ENCODE measurements at regions of chr11 and their contacts with region 1.

Region 1: DNA sequence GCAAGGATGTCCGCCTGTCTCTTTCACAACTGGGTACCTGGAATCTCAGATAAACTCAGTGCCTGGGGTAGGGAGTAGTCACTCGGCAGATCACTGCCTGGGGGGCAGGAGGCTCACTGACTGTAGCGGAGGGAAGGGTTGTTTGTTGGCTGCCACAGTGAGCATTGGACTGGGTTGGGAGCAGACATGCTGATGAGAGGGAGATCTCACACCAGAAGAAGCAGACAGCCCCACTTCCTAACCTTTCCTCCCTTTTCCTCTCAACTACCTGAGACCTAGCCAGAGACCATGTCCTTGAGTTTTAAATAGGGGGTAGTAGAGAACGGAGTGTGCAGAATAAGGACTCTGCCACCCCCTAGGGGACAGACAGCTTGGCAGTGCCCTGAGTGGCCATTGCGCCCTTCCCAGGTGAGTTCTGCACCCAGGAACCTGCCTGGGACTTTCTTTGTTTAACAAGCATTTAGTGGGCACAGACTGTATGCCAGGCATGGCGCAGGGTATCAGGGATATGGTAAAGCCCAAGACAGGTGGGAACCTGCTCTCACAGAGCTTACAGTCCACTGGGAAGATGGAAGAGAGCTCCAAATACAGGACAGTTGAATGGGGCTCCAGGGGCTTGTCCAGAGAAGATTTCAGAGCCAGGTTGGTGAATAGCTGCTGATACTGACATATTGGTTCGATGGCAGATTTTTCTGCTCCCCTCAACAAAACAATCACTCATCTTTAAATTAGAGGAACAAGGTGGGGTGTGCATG is 115.7 kb upstream of the NNMT start:
- DNase-seq: peak in 1 of 9 donors; percentile 28
- ATAC-seq: peak; percentile 47
- H3K4me3 ChIP-seq: peak overlapping the region; percentile 12
- H3K4me3 Mint-ChIP-seq: peak overlapping the region in 7 of 10 donors; percentile 26 to 75 (median 63)
- H3K27ac ChIP-seq: no peak overlapping the region
- H3K27ac Mint-ChIP-seq: peak overlapping the region in 7 of 9 donors; percentile 46 to 96 (median 85)
- H3K4me1 ChIP-seq: peaks cover 48 to 74% of the 10 kb centered on the region in 2 donors
- H3K4me1 Mint-ChIP-seq: peaks cover 54 to 98% (median 83%) of the 10 kb centered on the region in 7 donors
- H3K27me3 ChIP-seq: no peaks in the 10 kb centered on the region
- H3K27me3 Mint-ChIP-seq: peaks cover 0 to under 1% (median 0%) of the 10 kb centered on the region in 5 donors

Region 2: DNA sequence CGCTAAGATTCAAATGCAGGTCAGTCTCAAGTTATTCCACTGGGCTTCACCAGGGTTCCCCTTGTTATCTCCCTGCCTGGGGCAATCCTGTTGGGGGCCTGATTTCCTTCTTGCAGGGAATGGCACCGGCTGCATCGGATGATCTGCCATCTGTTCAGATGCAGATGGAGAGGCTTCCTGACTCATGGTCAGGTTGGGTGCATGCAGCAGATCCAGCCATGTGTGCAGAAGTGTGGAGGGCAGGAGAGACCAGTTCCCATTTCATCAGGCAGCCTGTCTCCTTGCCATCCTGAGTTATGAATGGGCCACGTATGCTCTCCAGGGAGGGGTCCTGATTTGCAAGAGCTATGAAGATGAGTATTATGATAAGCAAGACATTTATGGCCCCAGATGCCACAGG is 1758.6 kb before region 1 on chr11:
- CTCF ChIA-PET with region 1: no interaction called
- POLR2A ChIA-PET with region 1: no interaction called
- intact Hi-C with region 1: no loop called
- DNase-seq: no peak
- ATAC-seq: no peak
- H3K4me3 ChIP-seq: no peak overlapping the region
- H3K4me3 Mint-ChIP-seq: no peak overlapping the region
- H3K27ac ChIP-seq: no peak overlapping the region
- H3K27ac Mint-ChIP-seq: no peak overlapping the region
- H3K4me1 ChIP-seq: no peaks in the 10 kb centered on the region
- H3K4me1 Mint-ChIP-seq: peaks cover 3 to 13% (median 9%) of the 10 kb centered on the region in 7 donors
- H3K27me3 ChIP-seq: no peaks in the 10 kb centered on the region
- H3K27me3 Mint-ChIP-seq: peaks cover 0 to 9% (median 5%) of the 10 kb centered on the region in 5 donors

Region 3: DNA sequence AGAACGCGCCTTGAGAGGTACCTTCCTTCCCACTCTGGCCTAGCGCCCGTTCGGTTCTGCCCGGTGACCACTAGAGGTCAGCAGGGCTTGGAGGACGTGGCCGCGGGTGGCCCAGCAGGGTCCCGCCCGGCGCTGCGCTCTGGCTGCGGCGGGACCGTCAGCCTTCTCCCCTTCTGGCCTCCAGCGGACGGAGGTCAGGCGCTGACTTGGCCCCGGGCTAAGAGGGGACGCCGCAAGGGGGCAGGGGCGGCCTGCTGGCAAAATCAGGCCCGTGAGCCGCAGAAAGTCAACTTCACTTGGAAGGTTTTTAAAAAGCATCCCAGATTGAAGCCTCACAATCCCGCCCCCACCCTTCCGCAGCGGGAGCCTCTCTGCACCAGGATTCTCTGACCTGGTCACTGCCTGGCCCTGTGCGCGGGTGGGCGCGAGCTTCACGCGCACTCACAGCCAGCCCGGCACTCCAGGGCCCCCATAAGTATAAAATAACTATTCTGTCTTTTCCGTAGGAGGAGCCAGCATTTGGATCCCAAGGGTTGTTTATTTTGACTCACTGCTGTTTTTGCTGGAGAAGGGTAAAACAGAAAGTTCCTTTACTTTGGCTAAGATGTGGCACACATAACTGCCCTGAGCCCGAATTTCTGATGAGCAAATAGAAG is 144.2 kb before region 1 on chr11:
- CTCF ChIA-PET with region 1: interaction called, 15 read pairs
- POLR2A ChIA-PET with region 1: no interaction called
- intact Hi-C with region 1: loop called in 1 of 2 experiments (anchors 1 kb)
- DNase-seq: peak; percentile 16 to 57 (median 42)
- ATAC-seq: peak; percentile 89
- H3K4me3 ChIP-seq: no peak overlapping the region
- H3K4me3 Mint-ChIP-seq: peak overlapping the region in 5 of 10 donors; percentile 11 to 57 (median 44)
- H3K27ac ChIP-seq: no peak overlapping the region
- H3K27ac Mint-ChIP-seq: peak overlapping the region in 1 of 9 donors; percentile 28
- H3K4me1 ChIP-seq: peaks cover 0 to 3% of the 10 kb centered on the region in 2 donors
- H3K4me1 Mint-ChIP-seq: peaks cover 0 to 5% (median 0%) of the 10 kb centered on the region in 7 donors
- H3K27me3 ChIP-seq: no peaks in the 10 kb centered on the region
- H3K27me3 Mint-ChIP-seq: peaks cover 0 to 34% (median 0%) of the 10 kb centered on the region in 5 donors

Region 4: DNA sequence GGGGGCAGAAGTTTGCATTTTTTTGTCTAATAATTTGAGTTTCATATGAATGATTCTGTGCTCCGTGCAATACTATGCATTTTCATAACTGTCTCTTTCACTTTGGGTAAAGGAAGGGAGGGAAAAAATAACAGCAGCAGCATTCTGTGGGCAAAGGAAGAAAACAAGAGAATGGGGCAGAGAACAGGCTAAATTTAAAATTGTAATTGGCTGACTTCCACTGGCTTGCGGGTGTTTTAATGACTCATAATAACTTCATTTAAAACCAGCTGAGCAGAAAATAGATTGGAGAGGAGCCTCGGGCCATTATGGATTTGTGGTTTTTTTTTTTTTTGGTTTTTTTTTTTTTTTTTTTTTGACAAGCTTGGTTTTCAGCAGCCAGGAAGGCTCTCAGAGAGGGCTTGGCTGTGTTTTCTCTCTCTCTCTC is 13.6 kb before region 1 on chr11:
- CTCF ChIA-PET with region 1: interaction called, 14 read pairs
- POLR2A ChIA-PET with region 1: interaction called, 363 read pairs
- intact Hi-C with region 1: loop called (anchors 1 kb)
- DNase-seq: peak in 5 of 9 donors; percentile 24 to 63 (median 35)
- ATAC-seq: peak; percentile 41
- H3K4me3 ChIP-seq: no peak overlapping the region
- H3K4me3 Mint-ChIP-seq: peak overlapping the region; percentile 46 to 77 (median 68)
- H3K27ac ChIP-seq: no peak overlapping the region
- H3K27ac Mint-ChIP-seq: peak overlapping the region; percentile 28 to 93 (median 75)
- H3K4me1 ChIP-seq: peaks cover 59 to 88% of the 10 kb centered on the region in 2 donors
- H3K4me1 Mint-ChIP-seq: peaks cover 70 to 100% (median 97%) of the 10 kb centered on the region in 7 donors
- H3K27me3 ChIP-seq: no peaks in the 10 kb centered on the region
- H3K27me3 Mint-ChIP-seq: no peaks in the 10 kb centered on the region

Region 5: GRCh38 chr11:114197799-114198500 is 17.5 kb after region 1 on chr11:
- CTCF ChIA-PET with region 1: interaction called, 68 read pairs
- POLR2A ChIA-PET with region 1: interaction called, 363 read pairs
- intact Hi-C with region 1: loop called in 1 of 2 experiments (anchors 2 kb)
- DNase-seq: no peak
- ATAC-seq: no peak
- H3K4me3 ChIP-seq: no peak overlapping the region
- H3K4me3 Mint-ChIP-seq: no peak overlapping the region
- H3K27ac ChIP-seq: no peak overlapping the region
- H3K27ac Mint-ChIP-seq: no peak overlapping the region
- H3K4me1 ChIP-seq: peaks cover 0 to 5% of the 10 kb centered on the region in 2 donors
- H3K4me1 Mint-ChIP-seq: peaks cover 6 to 30% (median 25%) of the 10 kb centered on the region in 7 donors
- H3K27me3 ChIP-seq: no peaks in the 10 kb centered on the region
- H3K27me3 Mint-ChIP-seq: no peaks in the 10 kb centered on the region

Region 6: GRCh38 chr11:114250993-114251814 is 70.7 kb after region 1 on chr11:
- CTCF ChIA-PET with region 1: no interaction called
- POLR2A ChIA-PET with region 1: no interaction called
- intact Hi-C with region 1: loop called in 1 of 2 experiments (anchors 2 kb)
- DNase-seq: no peak
- ATAC-seq: no peak
- H3K4me3 ChIP-seq: no peak overlapping the region
- H3K4me3 Mint-ChIP-seq: no peak overlapping the region
- H3K27ac ChIP-seq: no peak overlapping the region
- H3K27ac Mint-ChIP-seq: peak overlapping the region in 2 of 9 donors; percentile 11 to 58
- H3K4me1 ChIP-seq: no peaks in the 10 kb centered on the region
- H3K4me1 Mint-ChIP-seq: peaks cover 0 to 6% (median 0%) of the 10 kb centered on the region in 7 donors
- H3K27me3 ChIP-seq: no peaks in the 10 kb centered on the region
- H3K27me3 Mint-ChIP-seq: peaks cover 0 to 3% (median 0%) of the 10 kb centered on the region in 5 donors

Region 7: DNA sequence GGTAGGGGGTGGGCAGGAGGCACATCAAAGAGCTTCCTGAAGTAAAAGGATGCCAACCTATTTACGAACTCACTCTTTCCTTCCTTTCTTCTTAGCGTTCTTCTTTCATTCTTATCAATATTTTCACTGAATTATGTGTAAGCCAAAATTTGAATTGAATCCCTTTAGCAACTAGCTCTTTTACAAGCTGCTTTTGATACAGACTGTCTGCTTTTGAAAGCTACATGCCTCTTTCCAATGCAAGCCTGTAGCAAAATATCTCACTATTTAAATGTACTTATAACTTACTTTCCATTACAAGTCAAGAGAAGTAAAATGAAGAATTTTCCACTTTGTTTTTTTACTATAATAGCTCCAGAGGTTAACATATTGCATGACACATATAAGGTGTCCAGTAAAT is 684.4 kb after region 1 on chr11:
- CTCF ChIA-PET with region 1: no interaction called
- POLR2A ChIA-PET with region 1: no interaction called
- intact Hi-C with region 1: no loop called
- DNase-seq: no peak
- ATAC-seq: no peak
- H3K4me3 ChIP-seq: no peak overlapping the region
- H3K4me3 Mint-ChIP-seq: no peak overlapping the region
- H3K27ac ChIP-seq: no peak overlapping the region
- H3K27ac Mint-ChIP-seq: no peak overlapping the region
- H3K4me1 ChIP-seq: no peaks in the 10 kb centered on the region
- H3K4me1 Mint-ChIP-seq: no peaks in the 10 kb centered on the region
- H3K27me3 ChIP-seq: no peaks in the 10 kb centered on the region
- H3K27me3 Mint-ChIP-seq: peaks cover 0 to 18% (median 6%) of the 10 kb centered on the region in 5 donors